T-cell (primary cell): ENCODE measurements at regions of chr10 and their contacts with region 1.

Region 1: DNA sequence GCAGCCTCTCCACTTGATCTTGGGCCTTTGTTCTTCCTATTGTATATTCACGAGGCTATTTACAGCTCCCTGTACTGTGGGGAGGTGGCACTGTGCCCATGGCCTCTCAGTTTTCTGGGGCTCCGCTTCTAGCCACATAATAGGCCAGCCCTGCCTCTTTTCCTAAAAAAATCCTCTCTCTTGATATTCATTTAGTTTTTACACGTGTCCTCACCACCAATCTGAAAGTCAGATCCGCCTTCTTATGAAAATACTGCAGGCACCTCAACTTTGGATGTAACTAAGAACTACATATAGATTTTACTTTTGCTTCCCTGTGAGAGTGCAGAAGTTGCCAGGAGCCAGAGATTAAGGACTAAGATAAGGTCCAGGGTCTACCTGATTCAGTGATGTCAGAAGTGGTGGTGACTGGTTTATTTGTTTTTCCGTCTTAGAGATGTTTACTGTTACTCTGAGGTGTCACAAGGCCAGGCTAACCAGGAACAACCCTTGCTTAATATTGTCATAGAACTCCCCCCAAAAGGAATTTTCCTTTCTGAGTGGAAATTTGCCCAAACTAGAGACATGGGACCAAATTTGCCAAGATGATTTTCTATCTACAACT is 7.8 kb downstream of the BAMBI start:
- DNase-seq: no peak
- ATAC-seq: no peak
- H3K4me3 ChIP-seq: no peak overlapping the region
- H3K4me3 Mint-ChIP-seq: no peak overlapping the region
- H3K27ac ChIP-seq: no peak overlapping the region
- H3K27ac Mint-ChIP-seq: no peak overlapping the region
- H3K4me1 ChIP-seq: peaks cover under 1 to 4% of the 10 kb centered on the region in 2 experiments
- H3K4me1 Mint-ChIP-seq: peaks cover 1 to 5% (median 3%) of the 10 kb centered on the region in 3 donors
- H3K27me3 ChIP-seq: peaks cover 5 to 14% of the 10 kb centered on the region in 2 experiments
- H3K27me3 Mint-ChIP-seq: peaks cover 43 to 58% of the 10 kb centered on the region in 2 donors

Region 2: GRCh38 chr10:28769091-28769604 is 84.1 kb after region 1 on chr10:
- CTCF ChIA-PET with region 1: interaction called in 1 of 2 experiments, 11 read pairs
- POLR2A ChIA-PET with region 1: no interaction called
- DNase-seq: no peak
- ATAC-seq: no peak
- H3K4me3 ChIP-seq: no peak overlapping the region
- H3K4me3 Mint-ChIP-seq: no peak overlapping the region
- H3K27ac ChIP-seq: no peak overlapping the region
- H3K27ac Mint-ChIP-seq: no peak overlapping the region
- H3K4me1 ChIP-seq: no peaks in the 10 kb centered on the region
- H3K4me1 Mint-ChIP-seq: no peaks in the 10 kb centered on the region
- H3K27me3 ChIP-seq: peaks cover 0 to 2% of the 10 kb centered on the region in 2 experiments
- H3K27me3 Mint-ChIP-seq: peaks cover 9 to 32% of the 10 kb centered on the region in 2 donors